Activated CD8-positive, alpha-beta T cell treated with anti-CD3 and anti-CD28 coated beads for 36 hours (primary cell): ENCODE measurements at regions of chr6 and their contacts with region 1.

Region 1: DNA sequence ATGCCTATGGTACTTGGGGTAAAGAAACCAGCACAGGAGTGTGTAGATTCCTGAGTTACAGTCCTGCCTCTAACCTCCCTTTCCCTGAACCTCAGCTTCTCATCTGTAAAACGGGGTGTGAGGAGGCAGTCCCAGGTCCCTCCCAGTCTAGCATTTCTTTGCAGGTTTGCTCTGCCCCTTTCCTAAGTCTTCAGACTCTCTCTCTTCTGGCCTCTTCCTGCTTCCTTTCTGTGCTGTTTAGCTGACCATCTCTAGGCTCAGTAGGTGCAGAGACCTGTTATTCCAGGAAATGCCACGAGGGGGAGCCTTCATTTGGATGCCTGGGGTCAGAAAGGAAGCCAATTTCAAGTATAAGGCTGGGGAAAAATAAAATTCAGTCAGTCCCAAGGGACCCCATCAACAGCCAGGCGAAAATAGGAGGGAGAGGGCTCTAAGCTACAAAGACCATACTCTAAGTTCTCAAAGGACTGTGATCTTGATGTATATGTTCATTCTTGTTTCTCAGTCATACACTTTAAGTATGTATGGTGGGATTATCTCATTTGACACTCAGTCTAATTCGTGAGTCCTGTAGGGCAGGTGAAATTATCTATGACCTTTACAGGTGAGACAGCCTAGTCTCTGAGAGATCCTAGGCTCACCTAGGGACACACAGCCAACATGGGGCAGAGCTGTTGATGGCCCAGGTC is 89.1 kb downstream of the NCR2 start:
- DNase-seq: peak; percentile 92
- ATAC-seq: peak; percentile 55
- H3K4me3 Mint-ChIP-seq: no peak overlapping the region
- H3K27ac Mint-ChIP-seq: no peak overlapping the region
- H3K4me1 Mint-ChIP-seq: peaks cover 10% of the 10 kb centered on the region
- H3K27me3 Mint-ChIP-seq: peaks cover 16% of the 10 kb centered on the region
- CTCF ChIP-seq: peak; percentile 80

Region 2: GRCh38 chr6:41332241-41332640 is 92.3 kb before region 1 on chr6:
- CTCF ChIA-PET with region 1: no interaction called
- POLR2A ChIA-PET with region 1: no interaction called
- intact Hi-C with region 1: no loop called
- DNase-seq: no peak
- ATAC-seq: no peak
- H3K4me3 Mint-ChIP-seq: no peak overlapping the region
- H3K27ac Mint-ChIP-seq: no peak overlapping the region
- H3K4me1 Mint-ChIP-seq: peaks cover 56% of the 10 kb centered on the region
- H3K27me3 Mint-ChIP-seq: no peaks in the 10 kb centered on the region
- CTCF ChIP-seq: no peak

Region 3: DNA sequence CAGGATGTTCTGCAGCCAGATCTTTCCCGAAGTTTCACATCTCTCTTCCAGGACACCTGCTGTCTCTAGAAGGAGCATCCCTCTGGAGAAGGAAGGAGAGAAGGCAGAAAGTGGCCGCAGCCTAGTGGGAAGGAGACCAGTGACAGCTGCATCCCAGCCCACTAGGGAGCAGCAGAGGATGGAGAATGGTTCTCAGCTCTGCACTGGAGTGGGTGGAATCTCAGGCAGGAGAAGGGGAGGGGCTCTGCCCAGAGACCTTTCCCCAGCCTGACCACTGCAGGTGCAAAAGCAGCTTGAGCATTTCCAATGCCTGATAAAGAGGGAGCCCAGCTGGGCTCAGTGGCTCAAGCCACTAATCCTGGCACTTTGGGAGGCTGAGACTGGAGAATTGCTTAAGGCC is 56.8 kb before region 1 on chr6:
- CTCF ChIA-PET with region 1: interaction called, 21 read pairs
- POLR2A ChIA-PET with region 1: no interaction called
- intact Hi-C with region 1: loop called (anchors 5 kb)
- DNase-seq: peak; percentile 18
- ATAC-seq: no peak
- H3K4me3 Mint-ChIP-seq: no peak overlapping the region
- H3K27ac Mint-ChIP-seq: no peak overlapping the region
- H3K4me1 Mint-ChIP-seq: peaks cover 16% of the 10 kb centered on the region
- H3K27me3 Mint-ChIP-seq: peaks cover 39% of the 10 kb centered on the region
- CTCF ChIP-seq: no peak

Region 4: DNA sequence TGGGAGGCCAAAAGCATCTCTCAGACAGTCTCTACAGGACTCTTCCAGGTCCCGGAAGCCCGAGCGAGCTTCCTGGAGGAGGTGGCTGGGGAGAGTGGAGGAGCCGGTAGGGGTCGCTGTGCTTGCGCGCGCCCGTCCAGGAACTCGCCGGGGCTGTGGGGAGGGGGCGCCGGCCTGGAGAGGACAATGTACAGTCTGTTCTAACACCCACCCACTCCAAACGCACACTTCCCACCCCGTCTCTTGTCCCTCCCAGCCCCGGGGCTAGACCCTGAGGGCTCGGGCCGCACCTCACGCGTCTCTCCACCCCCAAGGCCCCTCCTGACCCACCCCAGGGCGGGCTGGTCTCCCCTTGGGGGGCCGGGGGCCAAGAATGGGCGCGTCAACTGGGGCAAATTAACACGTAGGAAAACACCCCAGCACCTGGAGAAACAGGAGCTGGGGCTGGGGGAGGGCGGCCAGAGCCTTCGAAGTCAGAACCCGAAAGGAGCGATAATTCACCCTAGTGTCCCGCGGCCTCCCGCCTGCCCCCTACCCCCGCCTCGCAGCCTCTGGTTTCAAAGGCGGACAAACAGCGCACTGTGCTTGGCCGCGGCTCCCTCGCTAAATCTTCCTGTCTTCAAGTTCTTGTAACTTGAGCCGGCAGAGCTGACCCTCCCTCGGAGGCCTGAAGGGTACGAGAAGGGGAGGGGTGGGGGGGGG is 18.4 kb after region 1 on chr6:
- CTCF ChIA-PET with region 1: interaction called, 28 read pairs
- POLR2A ChIA-PET with region 1: interaction called, 7 read pairs
- intact Hi-C with region 1: no loop called
- DNase-seq: peak; percentile 32
- ATAC-seq: no peak
- H3K4me3 Mint-ChIP-seq: no peak overlapping the region
- H3K27ac Mint-ChIP-seq: peak overlapping the region; percentile 17
- H3K4me1 Mint-ChIP-seq: peaks cover 36% of the 10 kb centered on the region
- H3K27me3 Mint-ChIP-seq: peaks cover 8% of the 10 kb centered on the region
- CTCF ChIP-seq: peak; percentile 76

Region 5: GRCh38 chr6:41538556-41539182 is 114.2 kb after region 1 on chr6:
- CTCF ChIA-PET with region 1: interaction called, 11 read pairs
- POLR2A ChIA-PET with region 1: no interaction called
- intact Hi-C with region 1: loop called (anchors 10 kb)
- DNase-seq: no peak
- ATAC-seq: peak; percentile 49
- H3K4me3 Mint-ChIP-seq: no peak overlapping the region
- H3K27ac Mint-ChIP-seq: no peak overlapping the region
- H3K4me1 Mint-ChIP-seq: peaks cover 6% of the 10 kb centered on the region
- H3K27me3 Mint-ChIP-seq: peaks cover 21% of the 10 kb centered on the region
- CTCF ChIP-seq: no peak

Region 6: DNA sequence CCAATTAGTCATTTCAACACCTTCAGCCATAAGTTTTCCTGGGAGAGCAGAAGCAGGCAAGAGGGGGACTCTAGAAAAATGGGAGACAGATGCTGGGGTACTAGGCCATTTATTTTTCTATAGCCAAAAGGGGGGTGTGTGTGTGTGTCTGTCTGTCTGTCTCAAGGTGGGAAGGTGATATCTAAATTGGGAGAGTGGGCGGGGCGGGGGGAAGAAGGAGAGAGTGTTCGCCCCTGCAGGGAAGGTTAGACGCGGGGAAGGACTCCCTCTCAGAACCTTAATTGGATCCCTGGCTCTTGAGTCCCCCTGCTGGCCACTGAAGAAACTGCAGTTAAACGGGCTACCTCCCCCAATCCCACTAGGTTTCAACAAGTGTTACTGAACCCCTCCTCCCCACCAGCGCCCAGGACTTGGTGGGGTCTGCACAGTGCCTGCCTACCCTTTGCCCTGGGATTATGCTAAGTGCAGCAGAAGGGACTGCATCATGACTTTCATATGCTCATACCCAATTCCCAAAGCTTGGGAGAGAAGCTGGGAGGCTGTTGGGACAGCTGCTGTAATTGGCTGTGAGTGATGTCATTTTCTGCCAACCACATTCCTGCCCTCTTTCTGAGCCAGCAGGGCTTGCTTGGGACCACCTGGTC is 167.5 kb after region 1 on chr6:
- CTCF ChIA-PET with region 1: interaction called, 31 read pairs
- POLR2A ChIA-PET with region 1: no interaction called
- intact Hi-C with region 1: loop called (anchors 1 kb)
- DNase-seq: peak; percentile 85
- ATAC-seq: peak; percentile 97
- H3K4me3 Mint-ChIP-seq: no peak overlapping the region
- H3K27ac Mint-ChIP-seq: no peak overlapping the region
- H3K4me1 Mint-ChIP-seq: peaks cover 2% of the 10 kb centered on the region
- H3K27me3 Mint-ChIP-seq: no peaks in the 10 kb centered on the region
- CTCF ChIP-seq: peak; percentile 90

Region 7: GRCh38 chr6:41683510-41684310 is 259.2 kb after region 1 on chr6:
- CTCF ChIA-PET with region 1: interaction called, 10 read pairs
- POLR2A ChIA-PET with region 1: no interaction called
- intact Hi-C with region 1: no loop called
- DNase-seq: peak; percentile 87
- ATAC-seq: peak; percentile 93
- H3K4me3 Mint-ChIP-seq: peak overlapping the region; percentile 70
- H3K27ac Mint-ChIP-seq: peak overlapping the region; percentile 68
- H3K4me1 Mint-ChIP-seq: peaks cover 5% of the 10 kb centered on the region
- H3K27me3 Mint-ChIP-seq: peaks cover 1% of the 10 kb centered on the region
- CTCF ChIP-seq: peak; percentile 86